ENCODE measurements at regions of chr15 and their contacts with region 1.

Region 1: DNA sequence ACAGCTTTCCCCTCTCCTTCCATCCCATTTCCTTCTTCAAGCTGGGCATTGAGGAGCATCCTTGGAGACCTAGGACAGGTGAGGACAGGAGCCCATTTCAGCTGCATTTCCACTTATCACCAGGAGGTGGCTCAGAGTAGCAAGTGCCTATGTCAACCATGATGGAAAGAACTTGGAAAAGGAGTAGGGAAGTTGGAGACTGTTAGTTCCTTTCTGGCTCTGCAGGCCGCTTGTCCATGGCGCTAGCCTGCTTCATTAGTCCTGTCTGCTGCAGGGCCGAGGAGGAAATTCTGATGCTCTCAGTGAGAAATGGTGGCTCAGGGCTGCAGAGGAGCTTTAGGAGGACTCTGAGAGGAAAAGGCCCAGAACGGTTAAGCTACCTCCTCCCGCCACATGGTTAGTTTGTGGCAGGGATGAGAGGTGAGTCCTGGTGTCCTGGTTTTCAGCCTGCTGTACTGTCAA is 7.0 kb upstream of the CD276 start:
- DNase-seq: no peak
- H3K4me3 ChIP-seq: no peak overlapping the region
- H3K27me3 ChIP-seq: peaks cover 11% of the 10 kb centered on the region
- CTCF ChIP-seq: peak; percentile 87

Region 2: DNA sequence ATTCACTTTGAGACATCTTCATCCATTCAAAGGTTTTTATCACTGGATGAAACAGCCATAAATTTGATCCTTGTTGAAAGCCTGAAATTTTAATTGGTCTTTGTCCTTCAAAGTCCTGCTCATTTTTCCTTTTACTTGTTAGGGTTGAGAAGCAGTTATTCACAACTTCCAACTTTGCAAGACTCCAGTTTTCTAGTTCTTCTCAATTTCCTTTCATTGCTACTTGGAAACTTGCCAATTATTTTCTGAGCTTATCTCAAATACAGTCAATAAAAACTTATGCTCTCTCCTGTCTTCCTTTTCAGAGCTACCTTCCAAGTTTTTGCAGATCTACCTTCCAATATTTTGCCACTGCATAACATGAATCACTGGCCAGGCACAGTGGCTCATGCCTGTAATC is 16.7 kb before region 1 on chr15:
- CTCF ChIA-PET with region 1: interaction called, 11 read pairs
- POLR2A ChIA-PET with region 1: no interaction called
- DNase-seq: no peak
- H3K4me3 ChIP-seq: no peak overlapping the region
- H3K27me3 ChIP-seq: no peaks in the 10 kb centered on the region
- CTCF ChIP-seq: no peak

Region 3: GRCh38 chr15:73691396-73691795 is 14.2 kb after region 1 on chr15:
- CTCF ChIA-PET with region 1: interaction called, 316 read pairs
- POLR2A ChIA-PET with region 1: no interaction called
- DNase-seq: no peak
- H3K4me3 ChIP-seq: no peak overlapping the region
- H3K27me3 ChIP-seq: no peaks in the 10 kb centered on the region
- CTCF ChIP-seq: no peak

Region 4: DNA sequence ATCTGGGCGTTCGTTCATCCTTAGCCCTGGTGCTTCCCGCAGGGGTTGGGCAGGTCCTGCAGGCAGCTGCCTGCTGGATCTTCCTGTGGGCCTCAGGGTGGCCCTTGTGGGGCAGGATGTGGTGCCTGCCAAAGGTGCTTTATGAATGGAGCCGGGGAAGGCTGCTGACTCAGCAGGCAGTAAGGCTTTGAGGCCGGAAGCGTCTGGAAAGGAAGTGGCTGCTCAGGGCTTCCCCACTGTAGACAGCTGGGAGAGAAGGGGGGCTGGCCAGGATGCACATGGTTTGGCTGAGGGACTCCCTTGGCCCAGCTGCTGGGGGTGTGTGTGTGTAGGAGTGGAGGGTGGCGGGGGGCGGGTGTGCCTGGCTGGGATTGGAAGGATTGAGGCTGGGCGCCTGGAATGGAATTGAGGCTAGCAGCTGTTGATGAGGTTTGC is 19.9 kb after region 1 on chr15:
- CTCF ChIA-PET with region 1: interaction called, 316 read pairs
- POLR2A ChIA-PET with region 1: no interaction called
- DNase-seq: no peak
- H3K4me3 ChIP-seq: no peak overlapping the region
- H3K27me3 ChIP-seq: no peaks in the 10 kb centered on the region
- CTCF ChIP-seq: no peak